Aorta (tissue), 5 donors: ENCODE measurements at regions of chr12 and their contacts with region 1.

Region 1: GRCh38 chr12:53625946-53626701 is at the start of gene ATF7:
- DNase-seq: peak; percentile 98 to 100
- ATAC-seq: peak; percentile 99
- H3K4me3 ChIP-seq: peak within 1 kb of the TSS; percentile 84 to 90
- H3K27ac ChIP-seq: peak within 1 kb of the TSS; percentile 6 to 73
- H3K4me1 ChIP-seq: no peaks in the 10 kb centered on the region
- H3K27me3 ChIP-seq: no peaks in the 10 kb centered on the region
- total RNA-seq, gene ATF7: 68.4 to 73.5 TPM

Region 2: GRCh38 chr12:53518381-53518780 is 107.7 kb before region 1 on chr12:
- intact Hi-C with region 1: no loop called
- DNase-seq: no peak
- ATAC-seq: no peak
- H3K4me3 ChIP-seq: no peak overlapping the region
- H3K27ac ChIP-seq: no peak overlapping the region
- H3K4me1 ChIP-seq: no peaks in the 10 kb centered on the region
- H3K27me3 ChIP-seq: no peaks in the 10 kb centered on the region

Region 3: GRCh38 chr12:53543539-53543938 is 82.6 kb before region 1 on chr12:
- intact Hi-C with region 1: loop called in 1 of 2 experiments (anchors 5 kb)
- DNase-seq: peak in 1 of 2 donors; percentile 63
- ATAC-seq: peak; percentile 90
- H3K4me3 ChIP-seq: no peak overlapping the region
- H3K27ac ChIP-seq: peak overlapping the region; percentile 16 to 88
- H3K4me1 ChIP-seq: no peaks in the 10 kb centered on the region
- H3K27me3 ChIP-seq: no peaks in the 10 kb centered on the region

Region 4: GRCh38 chr12:53561590-53561953 is 64.6 kb before region 1 on chr12:
- intact Hi-C with region 1: loop called in 1 of 2 experiments (anchors 10 kb)
- DNase-seq: no peak
- ATAC-seq: peak; percentile 31
- H3K4me3 ChIP-seq: no peak overlapping the region
- H3K27ac ChIP-seq: peak overlapping the region; percentile 17 to 87
- H3K4me1 ChIP-seq: peaks cover 4 to 5% of the 10 kb centered on the region in 2 donors
- H3K27me3 ChIP-seq: no peaks in the 10 kb centered on the region

Region 5: DNA sequence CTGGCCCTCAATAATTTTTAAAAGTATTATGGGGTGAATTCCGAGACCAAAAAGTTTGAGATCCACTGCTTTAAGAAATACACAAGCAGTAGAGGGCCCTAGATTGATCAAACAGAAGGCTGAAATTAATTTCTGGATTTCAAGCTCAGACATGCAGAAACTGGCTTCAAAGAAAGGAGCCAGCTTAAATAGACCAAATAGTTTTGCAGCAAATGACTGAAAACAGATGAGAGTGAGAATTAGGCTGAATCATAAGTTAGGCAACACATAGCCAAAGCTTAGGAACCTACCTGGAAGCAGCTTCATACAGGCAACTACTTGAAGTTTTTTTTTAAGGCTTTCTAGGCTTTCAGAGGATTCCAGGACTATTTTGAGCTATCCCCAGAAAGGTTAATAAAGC is 12.3 kb before region 1 on chr12:
- intact Hi-C with region 1: no loop called
- DNase-seq: no peak
- ATAC-seq: no peak
- H3K4me3 ChIP-seq: no peak overlapping the region
- H3K27ac ChIP-seq: no peak overlapping the region
- H3K4me1 ChIP-seq: no peaks in the 10 kb centered on the region
- H3K27me3 ChIP-seq: no peaks in the 10 kb centered on the region

Region 6: GRCh38 chr12:53659011-53659551 is 33.0 kb after region 1 on chr12:
- intact Hi-C with region 1: loop called (anchors 5 kb)
- DNase-seq: peak in 1 of 2 donors; percentile 63
- ATAC-seq: peak; percentile 94
- H3K4me3 ChIP-seq: no peak overlapping the region
- H3K27ac ChIP-seq: peak overlapping the region; percentile 99 to 100
- H3K4me1 ChIP-seq: peaks cover 2 to 3% of the 10 kb centered on the region in 2 donors
- H3K27me3 ChIP-seq: no peaks in the 10 kb centered on the region

Region 7: GRCh38 chr12:53675651-53676453 is 49.7 kb after region 1 on chr12 and contains the start of gene ATP5MC2:
- intact Hi-C with region 1: loop called (anchors 1 to 5 kb)
- DNase-seq: peak; percentile 98 to 99
- ATAC-seq: peak; percentile 98
- H3K4me3 ChIP-seq: peak within 1 kb of the TSS; percentile 43 to 58
- H3K27ac ChIP-seq: peak within 1 kb of the TSS; percentile 80 to 99
- H3K4me1 ChIP-seq: peaks cover 0 to 2% of the 10 kb centered on the region in 2 donors
- H3K27me3 ChIP-seq: no peaks in the 10 kb centered on the region
- total RNA-seq, gene ATP5MC2: 152 to 183 TPM

Region 8: GRCh38 chr12:53750812-53751335 is 124.8 kb after region 1 on chr12:
- intact Hi-C with region 1: no loop called
- DNase-seq: no peak
- ATAC-seq: peak; percentile 38
- H3K4me3 ChIP-seq: peak overlapping the region; percentile 27 to 43
- H3K27ac ChIP-seq: no peak overlapping the region
- H3K4me1 ChIP-seq: no peaks in the 10 kb centered on the region
- H3K27me3 ChIP-seq: no peaks in the 10 kb centered on the region